Heart right ventricle (tissue), 16 donors: ENCODE measurements at regions of chr12 and their contacts with region 1.

Region 1: GRCh38 chr12:20798561-20798960 is 11.9 kb upstream of the SLCO1B3 start:
- DNase-seq: no peak
- ATAC-seq: peak in 4 of 8 donors; percentile 58 to 76 (median 72)
- H3K4me3 ChIP-seq: no peak overlapping the region
- H3K27ac ChIP-seq: no peak overlapping the region
- H3K4me1 ChIP-seq: peaks cover 0 to 7% (median 0%) of the 10 kb centered on the region in 9 donors
- H3K27me3 ChIP-seq: no peaks in the 10 kb centered on the region
- CTCF ChIP-seq: peak in 8 of 9 donors; percentile 22 to 65 (median 50)

Region 2: GRCh38 chr12:19410211-19410610 is 1388.3 kb before region 1 on chr12:
- intact Hi-C with region 1: no loop called
- DNase-seq: no peak
- ATAC-seq: peak in 7 of 8 donors; percentile 31 to 74 (median 51)
- H3K4me3 ChIP-seq: no peak overlapping the region
- H3K27ac ChIP-seq: peak overlapping the region in 9 of 10 donors; percentile 5 to 82 (median 39)
- H3K4me1 ChIP-seq: peaks cover 7 to 49% (median 26%) of the 10 kb centered on the region in 9 donors
- H3K27me3 ChIP-seq: no peaks in the 10 kb centered on the region
- CTCF ChIP-seq: no peak

Region 3: DNA sequence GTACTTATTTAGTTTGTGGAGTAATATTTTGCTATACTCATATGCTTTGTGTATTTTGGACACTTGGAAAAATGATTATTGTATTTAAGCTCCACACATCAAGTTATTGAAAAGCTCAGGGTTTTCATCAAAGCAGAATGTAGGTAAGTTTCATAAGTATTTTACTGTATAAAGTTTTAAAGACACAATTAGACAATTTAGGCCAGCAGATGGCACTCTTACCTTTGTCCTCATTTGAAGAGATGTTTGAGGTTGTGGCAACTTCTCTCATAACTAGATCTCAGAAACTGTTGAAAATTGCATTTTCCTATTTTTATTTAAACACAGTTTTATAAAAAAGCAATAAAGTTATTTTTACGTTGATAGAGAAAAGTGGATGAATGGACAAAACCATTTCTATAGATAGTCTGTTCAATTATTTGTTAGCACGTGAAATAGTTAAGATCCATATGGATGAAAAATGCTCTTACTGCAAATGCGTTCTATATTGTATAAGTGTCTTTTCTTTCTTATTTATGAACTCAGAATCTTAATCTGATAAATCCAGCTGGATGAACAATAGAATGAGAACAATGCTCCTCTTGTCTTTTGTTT is 1059.3 kb before region 1 on chr12:
- intact Hi-C with region 1: loop called in 3 of 10 experiments (anchors 5 to 10 kb)
- DNase-seq: peak in 1 of 2 donors; percentile 61
- ATAC-seq: peak in 4 of 8 donors; percentile 52 to 73 (median 62)
- H3K4me3 ChIP-seq: no peak overlapping the region
- H3K27ac ChIP-seq: no peak overlapping the region
- H3K4me1 ChIP-seq: peaks cover 0 to 36% (median 15%) of the 10 kb centered on the region in 9 donors
- H3K27me3 ChIP-seq: no peaks in the 10 kb centered on the region
- CTCF ChIP-seq: peak; percentile 45 to 80 (median 72)

Region 4: DNA sequence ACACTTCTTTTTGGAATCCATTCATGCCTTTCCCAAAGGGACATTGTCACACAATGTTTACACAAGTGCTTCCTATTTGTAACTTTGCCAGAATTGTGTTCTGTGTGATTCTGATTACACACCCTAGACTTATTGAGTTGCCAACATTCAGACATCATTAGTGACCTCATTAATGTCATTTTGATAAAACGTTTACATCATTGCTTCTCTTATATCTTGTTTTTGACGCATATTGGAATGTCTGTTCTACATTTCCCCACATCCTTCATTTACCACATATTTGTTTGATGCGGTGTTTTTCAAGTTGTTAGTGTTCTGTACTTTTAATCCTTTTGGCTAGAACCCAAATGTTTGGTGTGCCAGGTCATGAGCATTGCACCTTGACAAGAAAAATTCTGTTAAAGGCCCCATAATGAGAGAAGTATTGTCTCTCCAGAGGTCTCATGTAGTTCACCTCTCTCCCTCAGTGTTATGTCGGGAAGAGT is 1053.8 kb before region 1 on chr12:
- intact Hi-C with region 1: loop called in 3 of 10 experiments (anchors 5 to 10 kb)
- DNase-seq: peak in 1 of 2 donors; percentile 43
- ATAC-seq: peak; percentile 73 to 93 (median 88)
- H3K4me3 ChIP-seq: no peak overlapping the region
- H3K27ac ChIP-seq: peak overlapping the region in 7 of 10 donors; percentile 31 to 61 (median 50)
- H3K4me1 ChIP-seq: peaks cover 0 to 38% (median 18%) of the 10 kb centered on the region in 9 donors
- H3K27me3 ChIP-seq: no peaks in the 10 kb centered on the region
- CTCF ChIP-seq: no peak

Region 5: DNA sequence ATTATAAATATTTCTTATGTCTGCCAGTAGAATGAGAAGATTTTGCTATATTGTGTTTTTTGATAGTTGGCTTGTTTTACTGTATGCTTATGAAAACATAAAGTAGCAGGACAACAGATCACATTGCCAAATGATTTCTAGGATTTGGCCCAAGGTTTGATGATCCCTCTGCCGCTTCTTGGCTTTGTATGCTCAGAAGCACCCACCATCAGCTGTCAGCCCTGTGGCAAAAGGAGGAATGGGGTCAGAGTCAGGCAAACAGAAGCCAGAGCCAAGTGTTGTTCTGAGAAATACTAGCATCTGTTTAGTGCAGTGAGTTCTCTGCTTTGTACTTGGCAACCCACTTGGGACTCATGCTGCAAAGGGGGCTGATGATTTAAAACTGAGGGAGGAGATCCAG is 278.0 kb before region 1 on chr12:
- intact Hi-C with region 1: no loop called
- DNase-seq: no peak
- ATAC-seq: peak in 7 of 8 donors; percentile 46 to 87 (median 57)
- H3K4me3 ChIP-seq: no peak overlapping the region
- H3K27ac ChIP-seq: peak overlapping the region in 3 of 10 donors; percentile 6 to 34 (median 14)
- H3K4me1 ChIP-seq: peaks cover 8 to 82% (median 31%) of the 10 kb centered on the region in 9 donors
- H3K27me3 ChIP-seq: no peaks in the 10 kb centered on the region
- CTCF ChIP-seq: no peak

Region 6: GRCh38 chr12:20567413-20567812 is 231.1 kb before region 1 on chr12:
- intact Hi-C with region 1: no loop called
- DNase-seq: no peak
- ATAC-seq: peak in 3 of 8 donors; percentile 18 to 58 (median 27)
- H3K4me3 ChIP-seq: no peak overlapping the region
- H3K27ac ChIP-seq: no peak overlapping the region
- H3K4me1 ChIP-seq: peaks cover 0 to 57% (median 8%) of the 10 kb centered on the region in 9 donors
- H3K27me3 ChIP-seq: no peaks in the 10 kb centered on the region
- CTCF ChIP-seq: no peak

Region 7: DNA sequence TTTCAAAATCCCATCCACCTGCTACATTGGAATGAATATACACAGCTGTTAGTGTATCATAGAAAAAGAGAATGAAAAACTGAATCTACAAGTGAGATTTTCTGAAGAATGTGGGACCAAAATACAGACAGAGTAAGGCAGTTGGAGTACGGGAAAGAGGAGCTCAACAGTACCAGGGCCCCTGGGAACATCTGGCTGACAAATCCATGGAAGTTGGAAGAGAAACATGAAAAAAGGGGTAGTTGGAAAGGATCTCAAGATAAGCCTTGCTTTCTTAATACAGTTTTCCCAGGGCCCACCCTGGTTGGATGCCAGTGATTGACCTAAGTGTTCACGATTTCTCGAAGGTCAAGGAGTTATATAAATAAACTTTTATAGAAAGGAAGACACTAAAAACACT is 157.5 kb before region 1 on chr12:
- intact Hi-C with region 1: loop called in 5 of 10 experiments (anchors 5 to 10 kb)
- DNase-seq: no peak
- ATAC-seq: no peak
- H3K4me3 ChIP-seq: no peak overlapping the region
- H3K27ac ChIP-seq: no peak overlapping the region
- H3K4me1 ChIP-seq: peaks cover 0 to 11% (median 0%) of the 10 kb centered on the region in 9 donors
- H3K27me3 ChIP-seq: no peaks in the 10 kb centered on the region
- CTCF ChIP-seq: no peak

Region 8: GRCh38 chr12:20646239-20646827 is 152.2 kb before region 1 on chr12:
- intact Hi-C with region 1: loop called in 5 of 10 experiments (anchors 5 to 10 kb)
- DNase-seq: no peak
- ATAC-seq: peak in 5 of 8 donors; percentile 37 to 47 (median 40)
- H3K4me3 ChIP-seq: no peak overlapping the region
- H3K27ac ChIP-seq: no peak overlapping the region
- H3K4me1 ChIP-seq: peaks cover 0 to 2% (median 0%) of the 10 kb centered on the region in 9 donors
- H3K27me3 ChIP-seq: no peaks in the 10 kb centered on the region
- CTCF ChIP-seq: peak in 8 of 9 donors; percentile 21 to 66 (median 54)